Caco-2 (cell line): ENCODE measurements at regions of chr6 and their contacts with region 1.

Region 1: DNA sequence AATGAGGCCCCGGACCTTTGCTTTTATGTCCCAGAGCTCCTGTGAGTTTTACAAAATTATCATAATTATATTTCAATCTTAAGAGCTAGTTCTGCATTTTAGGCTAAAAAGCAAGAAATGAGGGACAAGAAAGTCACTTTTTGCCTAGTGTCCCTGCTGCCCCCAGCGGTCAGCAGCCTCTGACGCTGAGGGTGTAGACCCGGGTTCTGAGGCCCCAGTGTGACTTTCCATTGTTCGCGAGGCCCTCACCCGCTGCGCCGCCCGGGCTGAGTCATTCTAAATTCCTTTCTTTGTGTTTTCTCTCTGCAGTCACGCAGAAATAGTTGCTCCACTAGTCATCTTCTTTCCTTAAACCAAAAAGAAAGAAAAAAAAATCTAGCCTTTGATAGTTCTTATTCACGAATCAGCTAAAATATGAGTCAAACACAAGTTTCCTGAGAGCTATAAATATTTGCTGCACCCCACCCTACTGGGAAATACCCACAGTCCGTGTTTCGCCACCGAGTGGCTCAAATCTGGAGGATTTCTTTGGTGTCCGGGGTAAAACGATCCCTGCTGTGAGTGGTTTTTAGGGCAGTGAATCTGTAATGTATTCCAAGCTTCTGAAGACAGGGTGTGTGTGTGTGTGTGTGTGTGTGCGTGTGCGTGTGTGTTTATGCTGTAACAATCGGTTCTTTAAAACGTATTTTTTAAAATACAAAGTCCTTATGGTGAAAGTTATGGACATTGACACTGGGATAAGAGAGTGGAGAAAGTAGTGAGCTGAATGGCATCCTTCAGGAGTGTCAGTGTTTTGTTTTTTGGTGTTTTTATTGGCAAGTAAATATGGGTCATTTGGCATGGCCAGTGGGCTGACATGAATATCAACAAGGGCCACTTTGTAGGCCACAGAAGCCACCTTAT is 59.7 kb upstream of the EEF1A1 start:
- DNase-seq: peak; percentile 93
- H3K4me3 ChIP-seq: peak overlapping the region; percentile 21
- H3K4me3 Mint-ChIP-seq: peak overlapping the region; percentile 94
- H3K27ac Mint-ChIP-seq: peak overlapping the region; percentile 100
- H3K4me1 ChIP-seq: peaks cover 30% of the 10 kb centered on the region
- H3K4me1 Mint-ChIP-seq: peaks cover 20% of the 10 kb centered on the region
- H3K27me3 ChIP-seq: no peaks in the 10 kb centered on the region
- H3K27me3 Mint-ChIP-seq: no peaks in the 10 kb centered on the region
- CTCF ChIP-seq: peak; percentile 61 to 76

Region 2: DNA sequence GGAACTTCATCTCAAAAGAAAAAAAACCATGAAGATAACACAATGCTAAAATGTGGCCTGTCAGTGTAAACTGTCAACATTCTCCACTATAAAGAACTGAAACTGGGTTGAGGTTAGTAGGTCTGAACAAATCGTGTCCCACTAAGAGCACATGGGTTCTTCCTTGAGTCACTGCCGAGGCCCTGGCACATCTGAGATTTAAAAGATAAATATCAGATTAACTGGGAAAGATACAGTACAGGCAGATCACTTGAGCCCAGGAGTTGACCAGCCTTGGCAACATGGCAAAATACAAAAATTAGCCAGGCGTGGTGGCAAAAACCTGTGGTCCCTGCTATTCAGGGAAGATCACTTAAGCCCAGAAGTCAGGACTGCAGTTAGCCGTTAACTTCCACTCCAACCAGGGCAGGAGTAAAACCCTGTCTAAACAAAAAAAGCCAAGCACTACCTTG is 65.3 kb before region 1 on chr6:
- CTCF ChIA-PET with region 1: no interaction called
- POLR2A ChIA-PET with region 1: interaction called, 18 read pairs
- intact Hi-C with region 1: loop called (anchors 1 kb)
- DNase-seq: no peak
- H3K4me3 ChIP-seq: no peak overlapping the region
- H3K4me3 Mint-ChIP-seq: peak overlapping the region; percentile 5
- H3K27ac Mint-ChIP-seq: peak overlapping the region; percentile 61
- H3K4me1 ChIP-seq: peaks cover 3% of the 10 kb centered on the region; the same call in 1 of the 2 replicates
- H3K4me1 Mint-ChIP-seq: peaks cover 4% of the 10 kb centered on the region
- H3K27me3 ChIP-seq: no peaks in the 10 kb centered on the region
- H3K27me3 Mint-ChIP-seq: no peaks in the 10 kb centered on the region
- CTCF ChIP-seq: no peak

Region 3: GRCh38 chr6:73548458-73549446 is 31.7 kb before region 1 on chr6:
- CTCF ChIA-PET with region 1: no interaction called
- POLR2A ChIA-PET with region 1: no interaction called
- intact Hi-C with region 1: no loop called
- DNase-seq: no peak
- H3K4me3 ChIP-seq: no peak overlapping the region
- H3K4me3 Mint-ChIP-seq: no peak overlapping the region
- H3K27ac Mint-ChIP-seq: no peak overlapping the region
- H3K4me1 ChIP-seq: 0 out of 2 replicates have a peak, but pooled peaks cover 5% of the 10 kb centered on the region
- H3K4me1 Mint-ChIP-seq: no peaks in the 10 kb centered on the region
- H3K27me3 ChIP-seq: no peaks in the 10 kb centered on the region
- H3K27me3 Mint-ChIP-seq: no peaks in the 10 kb centered on the region
- CTCF ChIP-seq: no peak

Region 4: GRCh38 chr6:73566954-73567591 is 13.4 kb before region 1 on chr6:
- CTCF ChIA-PET with region 1: interaction called, 9 read pairs
- POLR2A ChIA-PET with region 1: interaction called, 15 read pairs
- intact Hi-C with region 1: loop called (anchors 1 kb)
- DNase-seq: peak; percentile 89 to 94
- H3K4me3 ChIP-seq: no peak overlapping the region
- H3K4me3 Mint-ChIP-seq: peak overlapping the region; percentile 66
- H3K27ac Mint-ChIP-seq: peak overlapping the region; percentile 89
- H3K4me1 ChIP-seq: peaks cover 54% of the 10 kb centered on the region
- H3K4me1 Mint-ChIP-seq: peaks cover 21% of the 10 kb centered on the region
- H3K27me3 ChIP-seq: no peaks in the 10 kb centered on the region
- H3K27me3 Mint-ChIP-seq: no peaks in the 10 kb centered on the region
- CTCF ChIP-seq: no peak

Region 5: DNA sequence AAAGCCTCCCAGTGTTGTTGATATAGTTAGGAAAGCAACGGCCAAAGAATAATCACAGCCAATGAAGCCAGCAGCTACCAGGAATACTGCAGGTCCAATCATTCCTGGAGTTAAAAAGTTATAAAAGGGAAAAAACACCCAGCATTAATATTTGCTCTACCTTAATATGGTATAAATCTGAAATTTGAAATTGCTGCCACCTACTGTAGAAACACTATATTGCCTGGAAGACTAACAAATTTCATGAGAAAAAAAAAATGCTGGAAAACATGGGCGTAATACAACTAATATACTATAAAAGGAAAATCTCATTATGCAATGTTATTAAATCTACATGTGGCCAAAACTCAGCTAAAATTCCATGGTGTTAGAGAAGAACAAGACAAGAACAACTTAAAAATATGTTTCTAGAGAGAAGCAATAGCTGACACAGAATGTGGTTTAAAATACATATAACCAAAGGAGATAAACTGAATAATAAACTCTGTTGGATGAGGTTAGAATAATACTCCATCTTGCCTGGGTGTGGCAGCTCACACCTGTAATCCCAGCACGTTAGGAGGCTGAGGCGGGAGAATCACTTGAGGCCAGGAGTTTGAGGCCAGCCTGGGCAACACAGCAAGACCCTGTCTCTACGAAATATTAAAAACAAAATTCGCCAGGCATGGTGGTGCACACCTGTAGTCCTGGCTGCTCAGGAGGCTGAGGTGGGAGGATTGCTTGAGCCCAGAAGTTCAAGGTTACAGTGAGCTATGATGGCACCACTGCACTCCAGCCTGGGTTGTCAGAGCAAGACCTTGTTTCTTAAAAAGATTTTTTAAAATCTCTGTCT is 30.2 kb after region 1 on chr6:
- CTCF ChIA-PET with region 1: no interaction called
- POLR2A ChIA-PET with region 1: no interaction called
- intact Hi-C with region 1: loop called (anchors 2 kb)
- DNase-seq: peak in 1 of 2 experiments; percentile 53
- H3K4me3 ChIP-seq: no peak overlapping the region
- H3K4me3 Mint-ChIP-seq: no peak overlapping the region
- H3K27ac Mint-ChIP-seq: no peak overlapping the region
- H3K4me1 ChIP-seq: no peaks in the 10 kb centered on the region
- H3K4me1 Mint-ChIP-seq: no peaks in the 10 kb centered on the region
- H3K27me3 ChIP-seq: no peaks in the 10 kb centered on the region
- H3K27me3 Mint-ChIP-seq: no peaks in the 10 kb centered on the region
- CTCF ChIP-seq: peak; percentile 42 to 58

Region 6: GRCh38 chr6:73653571-73654424 is 73.3 kb after region 1 on chr6 and contains the start of gene SLC17A5:
- CTCF ChIA-PET with region 1: interaction called, 3 read pairs
- POLR2A ChIA-PET with region 1: no interaction called
- intact Hi-C with region 1: loop called (anchors 2 kb)
- DNase-seq: peak; percentile 94
- H3K4me3 ChIP-seq: peak within 1 kb of the TSS; percentile 85
- H3K4me3 Mint-ChIP-seq: peak within 1 kb of the TSS; percentile 87
- H3K27ac Mint-ChIP-seq: peak within 1 kb of the TSS; percentile 96
- H3K4me1 ChIP-seq: peaks cover 25% of the 10 kb centered on the region
- H3K4me1 Mint-ChIP-seq: peaks cover 12% of the 10 kb centered on the region
- H3K27me3 ChIP-seq: no peaks in the 10 kb centered on the region
- H3K27me3 Mint-ChIP-seq: no peaks in the 10 kb centered on the region
- CTCF ChIP-seq: no peak
- total RNA-seq, gene SLC17A5: 13.0 TPM in 2 replicates